ENCODE measurements at regions of chr1 and their contacts with region 1.

Region 1: GRCh38 chr1:246689409-246690008 is 34.7 kb upstream of the SCCPDH start:
- DNase-seq: peak; percentile 92
- CTCF ChIP-seq: peak; percentile 85

Region 2: GRCh38 chr1:246640747-246641146 is 48.8 kb before region 1 on chr1:
- CTCF ChIA-PET with region 1: no interaction called
- POLR2A ChIA-PET with region 1: no interaction called
- DNase-seq: no peak
- CTCF ChIP-seq: no peak

Region 3: DNA sequence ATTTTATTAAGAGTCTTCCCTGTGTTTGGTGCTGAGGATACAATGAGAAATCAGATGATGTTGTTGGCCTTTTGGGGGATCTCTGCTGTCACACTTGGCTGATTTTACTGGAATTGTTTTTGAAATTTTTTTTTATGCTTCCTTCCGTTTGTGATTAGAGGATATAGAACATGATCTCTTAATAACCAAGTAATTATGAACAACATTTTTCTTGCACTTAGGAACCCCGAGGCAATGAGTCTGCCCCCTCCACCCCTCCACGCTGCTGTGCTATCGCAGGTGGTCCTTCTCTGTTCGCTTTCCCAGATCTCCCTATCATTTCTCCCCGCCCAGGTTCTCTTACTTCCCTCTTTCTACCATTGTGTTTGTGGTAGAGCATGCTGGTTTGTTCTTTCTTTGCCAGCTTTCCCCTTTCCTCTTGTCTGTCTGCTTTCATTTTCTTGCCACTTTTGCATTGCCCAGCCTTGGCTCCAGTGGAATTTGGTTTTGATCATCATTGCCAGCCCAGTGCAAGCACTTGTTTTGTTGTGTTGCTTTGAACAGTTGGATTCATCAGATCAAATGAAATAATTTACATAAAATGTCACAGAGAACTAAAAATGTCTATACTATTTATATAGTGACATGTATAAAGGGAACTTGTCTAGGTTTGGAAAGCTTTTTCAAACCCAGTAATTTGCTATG is 38.4 kb before region 1 on chr1:
- CTCF ChIA-PET with region 1: interaction called, 13 read pairs
- POLR2A ChIA-PET with region 1: no interaction called
- DNase-seq: no peak
- CTCF ChIP-seq: no peak

Region 4: DNA sequence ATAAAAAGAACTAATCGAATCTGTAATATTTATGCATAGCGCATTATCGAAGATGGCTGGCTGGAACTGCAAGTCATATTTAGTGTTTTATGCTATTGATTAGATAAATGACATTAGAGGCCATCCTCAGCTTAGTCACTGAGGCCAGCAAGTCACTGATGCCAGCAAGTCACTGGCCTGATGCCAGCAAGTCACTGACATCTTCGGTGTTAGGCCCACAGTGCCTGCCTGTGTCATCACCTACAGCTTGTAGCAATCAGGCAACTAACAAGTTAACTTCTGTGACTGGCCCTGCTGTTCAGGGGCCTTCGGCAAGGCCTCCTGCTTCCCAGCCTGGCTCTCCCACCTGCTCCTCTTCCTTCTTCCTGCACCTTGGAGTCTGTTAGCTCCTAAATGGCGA is 30.9 kb before region 1 on chr1:
- CTCF ChIA-PET with region 1: interaction called, 11 read pairs
- POLR2A ChIA-PET with region 1: no interaction called
- DNase-seq: no peak
- CTCF ChIP-seq: no peak

Region 5: GRCh38 chr1:246674049-246674448 is 15.5 kb before region 1 on chr1:
- CTCF ChIA-PET with region 1: interaction called, 21 read pairs
- POLR2A ChIA-PET with region 1: no interaction called
- DNase-seq: no peak
- CTCF ChIP-seq: no peak

Region 6: GRCh38 chr1:246753670-246754535 is 64.4 kb after region 1 on chr1:
- CTCF ChIA-PET with region 1: interaction called, 10 read pairs
- POLR2A ChIA-PET with region 1: no interaction called
- DNase-seq: peak; percentile 67
- CTCF ChIP-seq: peak; percentile 82

Region 7: GRCh38 chr1:246773213-246773641 is 83.7 kb after region 1 on chr1:
- CTCF ChIA-PET with region 1: no interaction called
- POLR2A ChIA-PET with region 1: no interaction called
- DNase-seq: peak; percentile 61
- CTCF ChIP-seq: no peak

Measured in GM10248 (cell line).